Panc1 (cell line): ENCODE measurements at regions of chr7 and their contacts with region 1.

Region 1: GRCh38 chr7:96614154-96614867 is 95.3 kb downstream of the SEM1 start:
- DNase-seq: no peak
- ATAC-seq: no peak
- H3K4me3 ChIP-seq: no peak overlapping the region
- H3K27ac ChIP-seq: no peak overlapping the region
- H3K4me1 ChIP-seq: no peaks in the 10 kb centered on the region
- H3K27me3 ChIP-seq: no peaks in the 10 kb centered on the region
- CTCF ChIP-seq: no peak

Region 2: GRCh38 chr7:96596120-96596826 is 18.0 kb before region 1 on chr7:
- CTCF ChIA-PET with region 1: no interaction called
- POLR2A ChIA-PET with region 1: no interaction called
- in situ Hi-C with region 1: no loop called
- intact Hi-C with region 1: loop called (anchors 1 kb)
- DNase-seq: peak; percentile 8
- ATAC-seq: peak; percentile 53; the same call in 1 of the 2 replicates
- H3K4me3 ChIP-seq: no peak overlapping the region
- H3K27ac ChIP-seq: no peak overlapping the region
- H3K4me1 ChIP-seq: no peaks in the 10 kb centered on the region
- H3K27me3 ChIP-seq: peaks cover 2% of the 10 kb centered on the region; the same call in 1 of the 2 replicates
- CTCF ChIP-seq: peak; percentile 36

Region 3: GRCh38 chr7:96663442-96663841 is 49.1 kb after region 1 on chr7:
- CTCF ChIA-PET with region 1: no interaction called
- POLR2A ChIA-PET with region 1: no interaction called
- in situ Hi-C with region 1: no loop called
- intact Hi-C with region 1: no loop called
- DNase-seq: no peak
- ATAC-seq: no peak
- H3K4me3 ChIP-seq: no peak overlapping the region
- H3K27ac ChIP-seq: no peak overlapping the region
- H3K4me1 ChIP-seq: no peaks in the 10 kb centered on the region
- H3K27me3 ChIP-seq: no peaks in the 10 kb centered on the region
- CTCF ChIP-seq: no peak